Activated CD8-positive, alpha-beta T cell treated with anti-CD3 and anti-CD28 coated beads, Interleukin-2, amount 10 ng/mL, durations not matched to agents 7 days and 5 days (primary cell): ENCODE measurements at regions of chr6 and their contacts with region 1.

Region 1: DNA sequence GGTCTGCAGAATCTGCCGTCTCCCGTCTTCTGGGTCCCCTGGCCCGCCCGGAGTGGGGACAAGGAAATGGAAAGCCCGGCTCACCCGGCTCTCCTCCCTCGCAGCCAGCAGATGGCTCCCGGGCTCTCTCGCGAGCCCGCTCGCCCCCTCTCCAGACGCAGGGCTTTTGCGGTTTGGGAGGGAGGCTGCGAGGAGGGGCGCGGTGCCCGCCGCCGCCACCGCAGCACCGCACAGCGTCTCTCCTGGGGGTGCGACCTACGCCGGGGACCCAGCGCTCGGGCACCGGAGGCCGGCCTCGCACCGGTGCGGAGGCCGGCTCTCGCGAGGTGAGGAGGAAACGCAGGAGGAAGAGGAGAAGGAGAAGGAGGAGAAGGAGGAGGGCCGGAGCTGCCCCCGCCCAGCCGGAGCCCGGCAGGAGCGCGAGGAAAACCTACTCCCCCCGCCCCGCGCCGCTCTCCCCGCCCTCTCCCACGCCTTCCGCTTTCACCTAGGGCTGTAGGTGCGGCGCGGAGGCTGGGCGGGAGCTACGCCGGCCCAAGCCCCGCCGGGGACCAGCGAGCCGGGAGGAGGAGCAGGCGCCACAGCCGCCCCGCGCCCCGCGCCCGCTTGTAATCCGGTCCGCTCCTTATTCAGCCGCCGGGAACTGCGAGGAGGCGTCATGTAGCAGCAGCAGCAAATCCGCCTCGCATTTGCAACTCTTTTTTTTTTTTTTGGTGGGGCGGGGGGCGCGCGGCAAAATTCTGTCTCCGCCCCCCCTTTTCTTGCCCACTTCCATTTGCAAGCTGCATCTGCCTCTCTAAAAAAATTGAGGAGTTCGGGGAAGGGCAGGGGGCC is at the start of gene CARMIL1:
- DNase-seq: peak; percentile 82
- ATAC-seq: peak; percentile 91
- H3K4me3 Mint-ChIP-seq: peak within 1 kb of the TSS; percentile 76
- H3K27ac Mint-ChIP-seq: peak within 1 kb of the TSS; percentile 48
- H3K4me1 Mint-ChIP-seq: peaks cover 20% of the 10 kb centered on the region
- H3K27me3 Mint-ChIP-seq: peaks cover 6% of the 10 kb centered on the region
- total RNA-seq, gene CARMIL1: 4.6 to 4.8 TPM

Region 2: DNA sequence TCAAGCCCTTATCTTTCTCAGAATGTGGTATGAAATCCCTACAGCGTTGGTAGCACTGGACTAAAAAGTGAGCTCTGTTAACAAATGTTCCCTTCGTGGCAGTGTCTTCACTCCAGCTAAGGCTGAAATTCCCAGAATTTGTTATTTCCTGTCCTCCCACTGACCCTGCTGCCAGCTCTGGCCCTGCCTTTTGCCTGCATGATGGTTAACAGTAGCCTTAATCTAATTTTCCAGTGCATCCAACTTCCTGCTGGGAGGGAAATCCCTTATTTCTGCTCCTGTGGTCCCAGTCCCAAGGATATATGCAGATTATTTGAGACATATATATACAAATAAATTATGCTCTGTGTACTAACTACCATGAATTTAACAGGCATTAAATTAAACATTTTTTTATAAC is 157.1 kb before region 1 on chr6:
- CTCF ChIA-PET with region 1: no interaction called
- POLR2A ChIA-PET with region 1: no interaction called
- DNase-seq: no peak
- ATAC-seq: no peak
- H3K4me3 Mint-ChIP-seq: no peak overlapping the region
- H3K27ac Mint-ChIP-seq: no peak overlapping the region
- H3K4me1 Mint-ChIP-seq: peaks cover 50% of the 10 kb centered on the region
- H3K27me3 Mint-ChIP-seq: no peaks in the 10 kb centered on the region

Region 3: DNA sequence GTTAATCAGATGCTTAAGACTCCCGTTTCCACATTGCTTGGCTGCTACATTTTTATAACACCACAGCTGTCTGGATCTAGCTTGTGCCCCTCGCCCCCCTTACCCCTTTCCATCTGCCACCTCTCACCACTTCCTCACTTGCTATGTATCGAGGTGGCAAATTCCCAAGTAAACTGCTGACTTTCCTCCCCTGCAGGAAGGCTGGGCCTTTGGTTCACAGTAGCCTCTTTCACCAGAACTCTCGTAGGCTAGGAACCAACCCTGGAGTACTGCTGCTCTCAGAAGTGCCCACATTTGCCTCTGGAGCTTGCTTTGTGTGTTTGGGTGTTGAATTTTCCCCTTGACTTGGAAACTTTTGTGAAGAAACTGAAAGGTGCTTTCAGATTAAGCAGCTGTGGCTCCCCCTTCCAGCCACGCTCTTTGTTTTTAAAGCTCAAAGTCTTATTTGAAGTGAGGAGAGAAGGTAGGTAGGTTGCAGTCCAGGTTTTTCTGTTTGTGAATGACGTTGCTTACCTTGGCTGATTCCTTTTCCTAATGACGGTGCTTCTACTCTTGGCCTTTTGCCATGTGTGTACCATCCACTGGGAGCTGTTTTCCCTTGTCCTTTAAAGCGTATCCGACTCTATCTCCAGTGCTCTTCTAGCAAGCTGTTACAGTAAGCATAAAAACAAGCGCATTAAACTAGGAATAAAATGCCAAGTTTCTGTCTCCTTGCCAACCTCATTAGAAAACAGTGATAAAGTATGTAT is 90.5 kb after region 1 on chr6:
- CTCF ChIA-PET with region 1: interaction called, 27 read pairs
- POLR2A ChIA-PET with region 1: interaction called, 7 read pairs
- DNase-seq: peak; percentile 39
- ATAC-seq: peak; percentile 22
- H3K4me3 Mint-ChIP-seq: peak overlapping the region; percentile 39
- H3K27ac Mint-ChIP-seq: peak overlapping the region; percentile 81
- H3K4me1 Mint-ChIP-seq: peaks cover 71% of the 10 kb centered on the region
- H3K27me3 Mint-ChIP-seq: no peaks in the 10 kb centered on the region

Region 4: GRCh38 chr6:25469797-25470388 is 190.8 kb after region 1 on chr6:
- CTCF ChIA-PET with region 1: interaction called, 11 read pairs
- POLR2A ChIA-PET with region 1: no interaction called
- DNase-seq: no peak
- ATAC-seq: no peak
- H3K4me3 Mint-ChIP-seq: no peak overlapping the region
- H3K27ac Mint-ChIP-seq: no peak overlapping the region
- H3K4me1 Mint-ChIP-seq: no peaks in the 10 kb centered on the region
- H3K27me3 Mint-ChIP-seq: no peaks in the 10 kb centered on the region

Region 5: DNA sequence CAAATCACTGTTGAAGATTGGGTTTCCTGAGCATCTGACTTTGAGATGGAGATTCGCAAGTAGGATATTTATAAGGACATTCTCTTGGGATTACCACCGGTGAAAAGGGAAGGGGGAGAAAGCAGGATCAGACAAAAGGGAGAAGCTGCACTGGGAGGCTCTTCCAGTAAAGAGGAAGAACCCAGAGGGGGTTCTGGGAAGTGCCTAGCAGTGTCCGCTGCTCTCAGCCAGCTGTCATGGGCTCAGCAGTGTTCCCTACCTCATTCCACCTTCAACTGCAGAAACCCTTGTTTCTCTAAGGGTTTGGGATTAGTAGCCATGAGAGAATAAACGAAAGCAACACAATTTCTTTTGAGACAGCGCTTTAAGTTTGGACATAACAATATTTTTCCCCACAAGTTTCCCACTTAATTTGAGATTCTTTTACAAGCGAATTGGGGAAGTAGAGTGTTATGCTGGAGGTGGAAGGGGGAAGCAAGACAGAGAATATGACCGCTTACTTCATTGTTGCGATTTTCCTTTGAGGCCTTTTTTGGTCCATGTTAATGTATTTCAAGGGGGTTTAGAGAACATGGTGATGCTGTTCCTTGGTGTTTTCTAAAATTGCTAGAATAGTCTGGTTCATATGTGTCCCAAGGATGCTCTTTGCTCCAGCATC is 218.4 kb after region 1 on chr6:
- CTCF ChIA-PET with region 1: interaction called, 233 read pairs
- POLR2A ChIA-PET with region 1: no interaction called
- DNase-seq: no peak
- ATAC-seq: no peak
- H3K4me3 Mint-ChIP-seq: no peak overlapping the region
- H3K27ac Mint-ChIP-seq: no peak overlapping the region
- H3K4me1 Mint-ChIP-seq: no peaks in the 10 kb centered on the region
- H3K27me3 Mint-ChIP-seq: no peaks in the 10 kb centered on the region

Region 6: GRCh38 chr6:25504661-25505060 is 225.5 kb after region 1 on chr6:
- CTCF ChIA-PET with region 1: interaction called, 11 read pairs
- POLR2A ChIA-PET with region 1: no interaction called
- DNase-seq: no peak
- ATAC-seq: no peak
- H3K4me3 Mint-ChIP-seq: no peak overlapping the region
- H3K27ac Mint-ChIP-seq: no peak overlapping the region
- H3K4me1 Mint-ChIP-seq: no peaks in the 10 kb centered on the region
- H3K27me3 Mint-ChIP-seq: no peaks in the 10 kb centered on the region

Region 7: DNA sequence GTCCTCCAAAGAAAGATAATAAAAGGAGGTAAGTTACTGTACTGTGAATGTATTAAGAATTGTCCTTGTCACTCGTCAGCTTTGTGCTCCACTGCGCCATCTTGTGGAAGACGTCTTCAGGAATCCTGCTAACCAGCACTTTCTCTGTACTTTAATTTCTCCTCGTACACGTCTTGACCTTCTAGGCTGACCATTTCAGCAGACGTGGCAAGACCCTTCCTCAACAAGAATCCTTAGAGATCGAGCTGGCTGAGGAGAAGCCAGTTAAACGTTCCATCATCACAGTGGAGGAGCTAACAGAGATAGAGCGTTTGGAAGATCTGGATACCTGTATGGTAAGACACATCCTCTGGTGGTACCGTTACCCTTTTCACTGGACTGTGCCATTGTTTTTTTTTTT is 277.4 kb after region 1 on chr6:
- CTCF ChIA-PET with region 1: interaction called, 30 read pairs
- POLR2A ChIA-PET with region 1: no interaction called
- DNase-seq: peak; percentile 85
- ATAC-seq: peak; percentile 71
- H3K4me3 Mint-ChIP-seq: no peak overlapping the region
- H3K27ac Mint-ChIP-seq: no peak overlapping the region
- H3K4me1 Mint-ChIP-seq: peaks cover 1% of the 10 kb centered on the region
- H3K27me3 Mint-ChIP-seq: no peaks in the 10 kb centered on the region

Region 8: DNA sequence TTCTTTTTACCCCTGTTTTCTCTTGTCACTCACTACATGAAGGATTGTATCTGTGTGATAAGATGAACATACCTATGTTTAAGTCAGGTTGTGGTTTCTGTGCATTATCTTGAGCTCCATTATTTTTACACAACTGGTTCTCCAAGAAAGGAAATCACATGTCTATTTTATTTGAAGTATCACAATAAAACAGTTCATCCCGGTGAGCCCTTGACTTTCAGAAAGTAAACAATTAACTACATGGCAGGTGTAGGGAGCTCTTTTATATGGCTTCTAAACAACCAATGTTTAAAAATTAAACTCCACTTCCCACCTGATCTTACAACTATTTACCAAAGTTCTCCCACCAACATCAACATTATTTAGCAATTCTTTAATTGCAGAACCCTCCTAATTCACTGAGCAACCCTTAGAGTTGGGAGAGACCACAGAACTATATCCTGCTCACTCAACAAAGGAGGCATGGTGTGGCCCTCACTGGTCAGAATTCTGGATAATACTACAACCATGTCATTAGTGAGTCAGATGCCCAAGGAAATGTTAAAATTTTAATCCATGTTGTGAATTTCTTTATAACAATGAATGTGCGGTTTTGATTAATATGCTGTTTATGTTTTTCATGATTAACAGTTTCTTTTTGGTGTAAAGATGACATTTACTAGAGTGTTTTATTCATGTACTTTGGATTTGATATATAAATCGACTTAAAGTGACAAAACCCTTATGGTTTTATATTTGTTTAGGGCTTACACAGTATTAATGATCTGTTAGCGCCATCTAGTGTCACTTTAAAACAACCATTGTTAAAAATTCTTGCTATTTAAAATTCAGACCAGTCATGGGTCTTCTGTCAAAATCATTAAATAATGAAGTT is 322.9 kb after region 1 on chr6:
- CTCF ChIA-PET with region 1: interaction called, 15 read pairs
- POLR2A ChIA-PET with region 1: no interaction called
- DNase-seq: no peak
- ATAC-seq: no peak
- H3K4me3 Mint-ChIP-seq: no peak overlapping the region
- H3K27ac Mint-ChIP-seq: no peak overlapping the region
- H3K4me1 Mint-ChIP-seq: no peaks in the 10 kb centered on the region
- H3K27me3 Mint-ChIP-seq: no peaks in the 10 kb centered on the region